Caco-2 (cell line): ENCODE measurements at regions of chr7 and their contacts with region 1.

Region 1: DNA sequence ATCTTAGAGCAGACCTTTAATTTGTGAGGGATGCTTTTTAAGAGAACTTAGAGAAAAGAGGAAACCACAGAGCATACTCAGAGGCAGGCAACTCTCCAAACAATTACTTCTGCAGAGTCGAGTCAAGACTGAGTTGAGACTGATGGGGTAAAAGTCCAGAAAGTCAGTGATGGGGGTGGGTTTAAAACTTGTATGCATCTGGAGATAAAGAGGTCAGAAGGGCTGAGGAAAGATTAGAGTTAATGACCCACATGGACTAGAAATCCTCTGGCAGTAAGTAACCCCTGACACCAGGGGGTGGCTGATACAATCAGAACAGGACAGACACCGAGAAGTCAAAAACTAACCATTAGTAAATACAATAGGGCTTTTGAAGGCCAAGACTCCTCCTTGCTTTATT is 42.4 kb upstream of the SEPTIN7 start:
- DNase-seq: peak; percentile 87 to 88
- H3K4me3 ChIP-seq: no peak overlapping the region
- H3K4me3 Mint-ChIP-seq: peak overlapping the region; percentile 15
- H3K27ac Mint-ChIP-seq: peak overlapping the region; percentile 46
- H3K4me1 ChIP-seq: peaks cover 95% of the 10 kb centered on the region
- H3K4me1 Mint-ChIP-seq: peaks cover 39% of the 10 kb centered on the region
- H3K27me3 ChIP-seq: no peaks in the 10 kb centered on the region
- H3K27me3 Mint-ChIP-seq: no peaks in the 10 kb centered on the region
- CTCF ChIP-seq: peak; percentile 50 to 66

Region 2: GRCh38 chr7:35714862-35715261 is 43.6 kb before region 1 on chr7:
- CTCF ChIA-PET with region 1: interaction called, 4 read pairs
- POLR2A ChIA-PET with region 1: no interaction called
- intact Hi-C with region 1: loop called (anchors 1 kb)
- DNase-seq: peak; percentile 67 to 78
- H3K4me3 ChIP-seq: no peak overlapping the region
- H3K4me3 Mint-ChIP-seq: peak overlapping the region; percentile 8
- H3K27ac Mint-ChIP-seq: peak overlapping the region; percentile 63
- H3K4me1 ChIP-seq: peaks cover 64% of the 10 kb centered on the region
- H3K4me1 Mint-ChIP-seq: peaks cover 43% of the 10 kb centered on the region
- H3K27me3 ChIP-seq: no peaks in the 10 kb centered on the region
- H3K27me3 Mint-ChIP-seq: no peaks in the 10 kb centered on the region
- CTCF ChIP-seq: peak; percentile 11 to 28

Region 3: GRCh38 chr7:35736725-35737124 is 21.7 kb before region 1 on chr7:
- CTCF ChIA-PET with region 1: no interaction called
- POLR2A ChIA-PET with region 1: no interaction called
- intact Hi-C with region 1: loop called (anchors 1 kb)
- DNase-seq: peak; percentile 58 to 74
- H3K4me3 ChIP-seq: no peak overlapping the region
- H3K4me3 Mint-ChIP-seq: no peak overlapping the region
- H3K27ac Mint-ChIP-seq: peak overlapping the region; percentile 81
- H3K4me1 ChIP-seq: peaks cover 42% of the 10 kb centered on the region
- H3K4me1 Mint-ChIP-seq: peaks cover 35% of the 10 kb centered on the region
- H3K27me3 ChIP-seq: no peaks in the 10 kb centered on the region
- H3K27me3 Mint-ChIP-seq: no peaks in the 10 kb centered on the region
- CTCF ChIP-seq: no peak

Region 4: DNA sequence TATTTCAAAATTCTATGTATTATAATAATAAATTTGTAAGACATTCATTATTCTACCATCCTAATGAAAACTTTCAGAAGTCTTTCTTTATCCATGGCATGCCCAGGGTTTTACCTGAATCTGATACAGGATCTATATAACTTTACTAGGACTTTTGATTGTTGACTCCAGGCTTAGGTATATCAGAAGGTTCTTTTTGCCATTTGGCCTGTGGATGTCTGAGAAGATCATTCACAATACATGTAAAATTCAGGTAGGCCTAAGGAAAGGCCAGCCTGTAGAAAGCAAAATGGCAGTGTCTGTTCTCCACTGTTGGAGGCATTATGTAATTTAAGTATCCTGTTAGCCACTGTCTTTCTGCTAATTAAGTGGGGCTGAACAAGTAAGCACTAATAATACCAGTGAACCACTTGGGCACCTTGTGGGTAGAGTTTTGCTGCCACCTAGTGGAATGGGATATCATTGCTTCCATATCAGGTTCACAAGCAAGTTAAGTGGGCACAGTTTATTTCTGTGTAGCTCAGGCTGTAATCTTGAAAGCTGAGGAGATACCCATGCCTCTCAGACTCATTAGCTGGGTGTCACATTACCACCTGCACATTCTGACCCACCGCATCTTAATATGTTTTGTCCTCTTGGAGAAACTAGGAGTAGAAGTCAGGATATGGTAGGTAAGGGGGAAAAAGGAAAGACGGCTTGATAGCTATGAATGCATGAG is 147.9 kb after region 1 on chr7:
- CTCF ChIA-PET with region 1: no interaction called
- POLR2A ChIA-PET with region 1: no interaction called
- intact Hi-C with region 1: loop called (anchors 1 kb)
- DNase-seq: peak; percentile 60 to 75
- H3K4me3 ChIP-seq: no peak overlapping the region
- H3K4me3 Mint-ChIP-seq: no peak overlapping the region
- H3K27ac Mint-ChIP-seq: no peak overlapping the region
- H3K4me1 ChIP-seq: no peaks in the 10 kb centered on the region
- H3K4me1 Mint-ChIP-seq: no peaks in the 10 kb centered on the region
- H3K27me3 ChIP-seq: no peaks in the 10 kb centered on the region
- H3K27me3 Mint-ChIP-seq: no peaks in the 10 kb centered on the region
- CTCF ChIP-seq: peak; percentile 74 to 88

Region 5: DNA sequence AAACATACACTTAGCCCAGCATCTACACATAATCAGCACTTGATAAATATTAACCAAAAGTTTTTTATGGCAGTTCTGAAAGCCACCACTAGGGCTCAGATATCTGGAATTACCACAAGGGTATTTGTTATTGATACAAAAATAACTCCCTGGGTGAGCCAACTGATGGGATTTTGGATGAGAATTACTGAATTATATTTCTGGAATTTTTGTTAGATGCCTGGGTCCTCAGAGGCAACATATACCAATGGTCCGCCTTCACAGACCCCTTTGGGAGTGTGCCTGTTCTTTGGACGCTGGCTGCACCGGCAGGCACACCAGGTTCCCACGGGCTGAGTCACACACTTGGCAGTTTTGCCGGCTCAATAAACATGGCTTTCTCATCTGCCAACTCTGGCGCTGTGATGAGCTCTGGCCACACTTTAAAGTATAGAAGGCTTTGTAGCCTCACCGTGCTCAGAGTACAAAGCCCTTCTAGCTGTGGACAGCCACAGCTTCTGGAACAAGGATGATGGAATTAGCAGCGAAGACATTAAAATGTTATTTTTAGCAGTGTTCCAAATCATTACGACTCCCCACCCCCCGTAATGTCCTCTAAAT is 370.1 kb after region 1 on chr7:
- CTCF ChIA-PET with region 1: no interaction called
- POLR2A ChIA-PET with region 1: no interaction called
- intact Hi-C with region 1: no loop called
- DNase-seq: peak in 1 of 2 experiments; percentile 38
- H3K4me3 ChIP-seq: no peak overlapping the region
- H3K4me3 Mint-ChIP-seq: no peak overlapping the region
- H3K27ac Mint-ChIP-seq: no peak overlapping the region
- H3K4me1 ChIP-seq: no peaks in the 10 kb centered on the region
- H3K4me1 Mint-ChIP-seq: no peaks in the 10 kb centered on the region
- H3K27me3 ChIP-seq: no peaks in the 10 kb centered on the region; the same call in 1 of the 2 replicates
- H3K27me3 Mint-ChIP-seq: peaks cover 3% of the 10 kb centered on the region
- CTCF ChIP-seq: peak in 1 of 2 experiments; percentile 37